ENCODE measurements at regions of chr3 and their contacts with region 1.

Region 1: DNA sequence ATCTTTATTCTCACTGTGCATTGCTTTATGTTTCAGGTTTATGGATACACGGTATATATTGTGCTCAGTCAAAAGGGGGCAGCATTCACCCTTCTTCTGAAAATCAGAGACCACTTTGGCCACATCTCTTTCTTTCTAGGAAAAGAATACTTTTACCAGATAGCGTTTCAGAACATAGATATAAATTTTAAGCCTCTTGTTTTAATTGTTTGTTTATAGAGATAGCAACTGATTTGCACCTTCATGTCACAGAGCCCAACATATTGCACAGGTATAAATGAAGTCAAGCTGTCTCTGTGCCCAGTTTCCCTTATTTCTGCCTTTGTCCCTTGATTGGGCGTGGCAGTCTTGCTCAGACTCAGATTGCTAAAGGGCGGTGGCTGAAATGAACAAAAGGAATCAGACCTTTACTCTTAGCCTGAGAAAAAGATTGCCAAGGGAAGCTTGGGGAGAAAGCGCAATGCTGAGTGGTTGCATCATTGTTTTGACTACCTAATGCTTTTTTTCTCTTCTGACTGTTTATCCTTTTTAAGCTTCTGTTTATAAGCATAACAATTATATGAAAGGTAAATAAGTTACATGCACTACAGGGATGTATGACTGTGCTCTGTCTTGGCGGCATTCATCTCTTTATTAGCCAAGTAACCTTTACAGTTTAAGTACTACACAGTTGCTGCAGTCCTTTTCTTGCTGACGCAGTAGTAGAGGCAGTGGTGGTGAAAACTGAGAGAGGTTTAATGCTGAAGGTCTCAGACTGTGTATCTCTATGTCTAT is 70.8 kb upstream of the ZBTB20 start:
- DNase-seq: peak in 3 of 4 experiments; percentile 6 to 33 (median 8)
- ATAC-seq: peak; percentile 70; the same call in 2 of the 3 replicates
- H3K4me3 ChIP-seq: no peak overlapping the region
- H3K27ac ChIP-seq: no peak overlapping the region
- H3K4me1 ChIP-seq: no peaks in the 10 kb centered on the region
- H3K27me3 ChIP-seq: no peaks in the 10 kb centered on the region
- CTCF ChIP-seq: peak; percentile 23 to 68 (median 44); a peak in 5 of 6 replicates
- EP300 ChIP-seq: no peak
- POLR2A ChIP-seq: no peak
- RAD21 ChIP-seq: peak; percentile 80 to 85

Region 2: DNA sequence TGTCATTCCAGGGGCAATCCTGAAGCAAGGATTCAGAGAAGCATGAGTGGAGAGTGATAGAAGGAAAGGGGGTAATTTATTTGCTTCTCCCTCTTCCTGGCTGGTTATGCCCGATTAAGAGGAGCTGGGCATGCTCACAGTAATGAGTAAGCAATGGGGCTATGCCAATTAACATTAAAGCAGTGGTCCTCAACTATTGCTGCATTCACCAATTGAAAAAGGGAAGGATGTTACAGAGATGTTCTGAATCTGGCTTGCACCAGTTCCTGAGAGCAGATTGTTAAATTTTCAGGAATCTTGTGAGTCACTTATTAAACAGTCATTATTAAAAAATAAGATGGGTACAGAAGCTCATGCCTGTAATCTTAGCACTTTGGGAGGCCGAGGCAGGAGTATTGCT is 15.2 kb after region 1 on chr3:
- CTCF ChIA-PET with region 1: no interaction called
- POLR2A ChIA-PET with region 1: no interaction called
- in situ Hi-C with region 1: no loop called
- intact Hi-C with region 1: no loop called
- DNase-seq: no peak
- ATAC-seq: no peak
- H3K4me3 ChIP-seq: no peak overlapping the region
- H3K27ac ChIP-seq: no peak overlapping the region
- H3K4me1 ChIP-seq: no peaks in the 10 kb centered on the region
- H3K27me3 ChIP-seq: no peaks in the 10 kb centered on the region
- CTCF ChIP-seq: no peak
- EP300 ChIP-seq: no peak
- POLR2A ChIP-seq: no peak
- RAD21 ChIP-seq: no peak

Region 3: GRCh38 chr3:115783938-115784738 is 566.3 kb after region 1 on chr3:
- CTCF ChIA-PET with region 1: interaction called, 5 read pairs
- POLR2A ChIA-PET with region 1: no interaction called
- in situ Hi-C with region 1: no loop called
- intact Hi-C with region 1: loop called (anchors 2 kb)
- DNase-seq: peak; percentile 79 to 89 (median 82)
- ATAC-seq: peak; percentile 97
- H3K4me3 ChIP-seq: peak overlapping the region; percentile 52
- H3K27ac ChIP-seq: peak overlapping the region; percentile 72; the same call in 2 of the 3 replicates
- H3K4me1 ChIP-seq: peaks cover 3 to 8% of the 10 kb centered on the region in 2 experiments; a peak in 2 of 5 replicates
- H3K27me3 ChIP-seq: no peaks in the 10 kb centered on the region
- CTCF ChIP-seq: peak; percentile 81 to 90 (median 83)
- EP300 ChIP-seq: no peak
- POLR2A ChIP-seq: no peak
- RAD21 ChIP-seq: peak; percentile 65

Region 4: GRCh38 chr3:115814778-115815380 is 597.0 kb after region 1 on chr3:
- CTCF ChIA-PET with region 1: interaction called, 13 read pairs
- POLR2A ChIA-PET with region 1: no interaction called
- in situ Hi-C with region 1: no loop called
- intact Hi-C with region 1: loop called (anchors 2 kb)
- DNase-seq: peak; percentile 46 to 62 (median 58)
- ATAC-seq: peak; percentile 75
- H3K4me3 ChIP-seq: no peak overlapping the region
- H3K27ac ChIP-seq: no peak overlapping the region
- H3K4me1 ChIP-seq: no peaks in the 10 kb centered on the region
- H3K27me3 ChIP-seq: peaks cover 0 to 5% of the 10 kb centered on the region in 2 experiments; a peak in 1 of 5 replicates
- CTCF ChIP-seq: peak; percentile 59 to 78 (median 69); a peak in 5 of 6 replicates
- EP300 ChIP-seq: no peak
- POLR2A ChIP-seq: no peak
- RAD21 ChIP-seq: peak; percentile 59 to 74